ENCODE measurements at regions of chr16 and their contacts with region 1.

Region 1: GRCh38 chr16:67561824-67562525 is 351 bp upstream of the CTCF start:
- DNase-seq: peak; percentile 87 to 97
- H3K4me3 ChIP-seq: peak overlapping the region; percentile 61
- H3K27ac ChIP-seq: peak overlapping the region; percentile 89
- H3K4me1 ChIP-seq: peaks cover 24% of the 10 kb centered on the region
- H3K27me3 ChIP-seq: no peaks in the 10 kb centered on the region
- CTCF ChIP-seq: no peak

Region 2: GRCh38 chr16:67296422-67296821 is 265.6 kb before region 1 on chr16:
- CTCF ChIA-PET with region 1: no interaction called
- POLR2A ChIA-PET with region 1: no interaction called
- intact Hi-C with region 1: no loop called
- DNase-seq: peak; percentile 45 to 69
- H3K4me3 ChIP-seq: no peak overlapping the region
- H3K27ac ChIP-seq: no peak overlapping the region
- H3K4me1 ChIP-seq: peaks cover 11% of the 10 kb centered on the region
- H3K27me3 ChIP-seq: no peaks in the 10 kb centered on the region
- CTCF ChIP-seq: no peak

Region 3: GRCh38 chr16:67384778-67385510 is 177.0 kb before region 1 on chr16:
- CTCF ChIA-PET with region 1: interaction called, 13 read pairs
- POLR2A ChIA-PET with region 1: no interaction called
- intact Hi-C with region 1: no loop called
- DNase-seq: no peak
- H3K4me3 ChIP-seq: no peak overlapping the region
- H3K27ac ChIP-seq: no peak overlapping the region
- H3K4me1 ChIP-seq: no peaks in the 10 kb centered on the region
- H3K27me3 ChIP-seq: no peaks in the 10 kb centered on the region
- CTCF ChIP-seq: no peak

Region 4: GRCh38 chr16:67480833-67481560 is 81.0 kb before region 1 on chr16 and contains the start of gene ATP6V0D1:
- CTCF ChIA-PET with region 1: no interaction called
- POLR2A ChIA-PET with region 1: no interaction called
- intact Hi-C with region 1: loop called (anchors 10 kb)
- DNase-seq: peak; percentile 92 to 98
- H3K4me3 ChIP-seq: peak within 1 kb of the TSS; percentile 71
- H3K27ac ChIP-seq: peak within 1 kb of the TSS; percentile 31
- H3K4me1 ChIP-seq: peaks cover 14% of the 10 kb centered on the region
- H3K27me3 ChIP-seq: no peaks in the 10 kb centered on the region
- CTCF ChIP-seq: peak; percentile 81
- total RNA-seq, gene ATP6V0D1: 51.5 and 61.0 TPM in 2 replicates

Region 5: DNA sequence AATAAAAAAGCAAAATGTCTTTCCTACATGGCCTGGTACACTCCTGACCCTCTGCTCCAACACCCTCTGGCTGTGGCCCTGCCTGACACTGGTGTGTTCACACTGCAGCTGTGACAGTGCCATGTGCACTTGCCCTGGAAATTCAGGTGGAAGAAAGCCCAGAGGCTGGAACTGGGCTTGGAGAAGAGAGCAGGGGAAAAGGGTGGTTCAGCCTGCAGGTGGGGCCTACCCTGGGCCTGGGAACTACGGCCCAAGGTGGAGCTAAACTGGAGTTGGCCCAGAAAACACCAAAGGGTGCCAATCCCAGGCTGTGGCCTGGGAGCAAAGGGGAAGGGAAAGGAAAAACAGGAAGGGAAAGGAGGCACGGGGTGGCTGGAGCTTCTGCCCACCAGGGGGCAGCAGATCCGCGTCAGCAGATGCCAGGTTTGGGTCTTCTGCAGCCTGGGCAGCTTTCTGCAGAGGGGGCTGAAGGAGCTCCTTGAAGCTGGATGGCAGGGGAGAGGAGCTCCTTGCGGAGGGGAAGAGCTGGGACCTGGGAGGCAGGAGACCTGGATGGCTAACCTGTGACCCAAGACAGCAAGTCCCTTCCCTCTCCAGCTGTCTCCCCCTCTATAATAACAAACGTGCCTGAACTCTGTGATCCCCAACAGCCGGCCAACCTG is 15.1 kb before region 1 on chr16:
- CTCF ChIA-PET with region 1: interaction called, 11 read pairs
- POLR2A ChIA-PET with region 1: interaction called, 18 read pairs
- intact Hi-C with region 1: no loop called
- DNase-seq: peak in 1 of 2 experiments; percentile 75
- H3K4me3 ChIP-seq: no peak overlapping the region
- H3K27ac ChIP-seq: no peak overlapping the region
- H3K4me1 ChIP-seq: no peaks in the 10 kb centered on the region
- H3K27me3 ChIP-seq: no peaks in the 10 kb centered on the region
- CTCF ChIP-seq: peak; percentile 84

Region 6: DNA sequence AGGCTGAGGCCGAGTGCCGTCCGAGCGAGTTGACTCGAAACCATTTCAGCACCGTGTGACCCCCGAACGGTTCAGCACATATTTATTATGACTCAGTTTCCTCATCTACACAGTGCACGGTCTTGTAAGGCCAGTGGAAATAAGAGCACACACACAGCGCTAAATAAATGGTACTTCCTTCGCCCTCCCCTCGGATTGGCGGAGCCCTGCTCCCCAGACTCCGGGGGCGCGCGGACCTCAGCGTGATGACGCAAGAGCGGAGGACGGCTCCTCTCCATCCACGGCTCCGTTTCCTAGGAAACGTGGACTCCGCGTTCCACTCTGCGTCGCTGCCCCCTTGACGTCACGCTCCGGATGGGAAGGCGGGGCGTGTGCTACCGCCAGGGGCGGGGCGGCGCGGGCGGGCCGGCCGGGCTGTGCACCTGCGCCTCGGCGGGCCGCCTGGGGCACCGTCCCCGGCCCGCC is 98.6 kb after region 1 on chr16 and contains the start of gene PARD6A:
- CTCF ChIA-PET with region 1: no interaction called
- POLR2A ChIA-PET with region 1: interaction called, 3 read pairs
- intact Hi-C with region 1: loop called (anchors 2 kb)
- DNase-seq: peak; percentile 79 to 87
- H3K4me3 ChIP-seq: peak within 1 kb of the TSS; percentile 97
- H3K27ac ChIP-seq: peak within 1 kb of the TSS; percentile 52
- H3K4me1 ChIP-seq: peaks cover 7% of the 10 kb centered on the region
- H3K27me3 ChIP-seq: no peaks in the 10 kb centered on the region
- CTCF ChIP-seq: no peak
- total RNA-seq, gene PARD6A: 4.4 and 8.1 TPM in 2 replicates

Region 7: DNA sequence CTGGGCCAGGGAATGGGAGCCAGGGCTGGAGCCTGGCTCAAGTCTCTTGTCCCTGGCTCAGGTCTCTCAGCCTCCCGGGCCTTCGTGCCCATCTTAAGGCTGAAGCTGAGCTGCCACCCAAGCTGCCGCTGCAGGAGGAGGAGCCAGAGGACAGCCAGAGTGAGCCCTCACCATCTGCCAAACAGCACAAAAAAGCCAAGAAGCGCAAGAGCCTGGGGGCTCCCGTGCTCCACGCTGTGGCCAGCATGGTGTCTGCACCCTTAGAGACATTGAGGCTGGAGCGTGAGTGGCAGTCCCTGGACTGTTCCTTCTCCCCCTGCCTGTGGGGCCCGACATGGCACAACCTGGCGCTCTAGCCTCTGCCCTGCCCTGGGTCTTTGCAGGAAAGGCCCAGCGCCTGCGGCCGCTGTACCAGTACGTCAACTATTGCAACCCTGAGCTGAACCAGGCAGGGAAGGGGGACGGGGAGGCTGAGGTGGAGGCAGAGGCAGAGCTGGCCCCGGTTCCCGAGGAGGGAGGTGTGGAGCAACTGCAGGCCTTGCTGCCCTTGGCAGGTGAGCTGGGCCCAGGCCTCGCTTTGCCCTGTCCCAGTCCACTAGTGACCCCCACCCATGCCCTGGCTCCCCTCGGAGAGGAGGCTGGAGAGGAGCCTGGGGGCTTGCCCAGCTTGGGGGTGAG is 106.0 kb after region 1 on chr16:
- CTCF ChIA-PET with region 1: no interaction called
- POLR2A ChIA-PET with region 1: no interaction called
- intact Hi-C with region 1: loop called (anchors 2 kb)
- DNase-seq: peak; percentile 68 to 77
- H3K4me3 ChIP-seq: no peak overlapping the region
- H3K27ac ChIP-seq: no peak overlapping the region
- H3K4me1 ChIP-seq: no peaks in the 10 kb centered on the region
- H3K27me3 ChIP-seq: no peaks in the 10 kb centered on the region
- CTCF ChIP-seq: peak; percentile 52

Region 8: DNA sequence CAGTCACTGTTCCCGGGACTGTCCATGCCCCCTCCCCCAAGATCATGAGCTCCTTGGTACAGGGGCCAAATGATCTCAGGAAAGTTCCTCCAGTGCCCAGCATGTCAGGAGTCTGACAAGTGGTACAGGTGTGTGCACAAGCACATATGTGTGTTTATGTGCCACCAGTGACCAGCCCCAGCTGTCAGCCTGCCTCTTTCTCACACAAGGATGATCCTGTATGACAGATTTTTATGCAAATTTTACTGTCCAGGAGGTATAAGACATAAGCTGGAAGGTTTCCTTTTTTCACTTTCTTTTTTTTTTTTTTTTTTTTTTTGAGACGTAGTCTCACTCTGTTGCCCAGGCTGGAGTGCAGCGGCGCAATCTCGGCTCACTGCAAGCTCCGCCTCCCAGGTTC is 188.5 kb after region 1 on chr16:
- CTCF ChIA-PET with region 1: no interaction called
- POLR2A ChIA-PET with region 1: no interaction called
- intact Hi-C with region 1: no loop called
- DNase-seq: no peak
- H3K4me3 ChIP-seq: no peak overlapping the region
- H3K27ac ChIP-seq: no peak overlapping the region
- H3K4me1 ChIP-seq: no peaks in the 10 kb centered on the region
- H3K27me3 ChIP-seq: no peaks in the 10 kb centered on the region
- CTCF ChIP-seq: no peak